Left colon (tissue), 2 donors: ENCODE measurements at regions of chr17 and their contacts with region 1.

Region 1: DNA sequence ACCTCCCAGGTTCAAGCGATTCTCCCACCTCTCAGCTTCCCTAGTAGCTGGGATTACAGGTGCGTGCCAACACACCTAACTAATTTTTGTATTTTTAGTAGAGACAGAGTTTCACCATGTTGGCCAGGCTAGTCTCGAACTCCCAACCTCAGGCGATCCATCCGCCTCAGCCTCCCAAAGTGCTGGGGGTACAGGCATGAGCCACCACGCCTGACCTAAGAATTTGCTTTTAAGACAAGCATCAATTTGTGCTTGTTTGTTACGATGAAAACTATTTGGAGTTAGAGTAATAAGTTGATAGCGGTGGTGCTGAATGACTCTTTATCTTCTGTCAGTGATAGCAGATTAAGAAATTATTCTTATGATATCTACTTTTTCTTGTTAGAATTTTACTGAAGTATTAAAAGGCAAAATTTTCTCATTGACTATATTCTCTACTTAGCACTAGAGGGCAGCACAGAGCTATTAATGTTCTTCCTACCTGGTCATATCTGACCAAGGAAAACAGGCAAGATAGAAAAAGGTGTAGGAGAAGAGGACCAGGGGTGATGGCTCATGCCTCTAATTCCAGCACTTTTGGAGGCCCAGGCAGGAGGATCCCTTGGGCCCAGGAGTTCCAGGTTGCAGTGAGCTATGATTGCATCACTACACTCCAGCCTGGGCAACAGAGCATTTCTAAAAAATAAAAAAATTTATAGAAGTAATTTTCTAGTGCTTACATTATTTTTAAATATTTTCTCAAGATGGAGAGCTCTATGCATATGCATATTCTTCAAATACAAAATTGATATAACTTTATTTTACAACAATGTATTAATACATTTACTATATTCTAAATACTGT is 24.5 kb downstream of the STXBP4 start:
- DNase-seq: no peak
- ATAC-seq: peak; percentile 72

Region 2: GRCh38 chr17:55238179-55238930 is 245.3 kb after region 1 on chr17:
- intact Hi-C with region 1: loop called in 1 of 2 experiments (anchors 10 kb)
- DNase-seq: peak; percentile 92 to 94
- ATAC-seq: peak; percentile 99

Region 3: GRCh38 chr17:55295411-55296170 is 302.6 kb after region 1 on chr17:
- intact Hi-C with region 1: loop called in 1 of 2 experiments (anchors 5 kb)
- DNase-seq: peak; percentile 28 to 49
- ATAC-seq: peak; percentile 85

Region 4: GRCh38 chr17:55348749-55349354 is 355.8 kb after region 1 on chr17:
- intact Hi-C with region 1: loop called in 1 of 2 experiments (anchors 5 kb)
- DNase-seq: peak in 1 of 2 donors; percentile 44
- ATAC-seq: peak; percentile 71